ENCODE measurements at regions of chr1 and their contacts with region 1.

Region 1: DNA sequence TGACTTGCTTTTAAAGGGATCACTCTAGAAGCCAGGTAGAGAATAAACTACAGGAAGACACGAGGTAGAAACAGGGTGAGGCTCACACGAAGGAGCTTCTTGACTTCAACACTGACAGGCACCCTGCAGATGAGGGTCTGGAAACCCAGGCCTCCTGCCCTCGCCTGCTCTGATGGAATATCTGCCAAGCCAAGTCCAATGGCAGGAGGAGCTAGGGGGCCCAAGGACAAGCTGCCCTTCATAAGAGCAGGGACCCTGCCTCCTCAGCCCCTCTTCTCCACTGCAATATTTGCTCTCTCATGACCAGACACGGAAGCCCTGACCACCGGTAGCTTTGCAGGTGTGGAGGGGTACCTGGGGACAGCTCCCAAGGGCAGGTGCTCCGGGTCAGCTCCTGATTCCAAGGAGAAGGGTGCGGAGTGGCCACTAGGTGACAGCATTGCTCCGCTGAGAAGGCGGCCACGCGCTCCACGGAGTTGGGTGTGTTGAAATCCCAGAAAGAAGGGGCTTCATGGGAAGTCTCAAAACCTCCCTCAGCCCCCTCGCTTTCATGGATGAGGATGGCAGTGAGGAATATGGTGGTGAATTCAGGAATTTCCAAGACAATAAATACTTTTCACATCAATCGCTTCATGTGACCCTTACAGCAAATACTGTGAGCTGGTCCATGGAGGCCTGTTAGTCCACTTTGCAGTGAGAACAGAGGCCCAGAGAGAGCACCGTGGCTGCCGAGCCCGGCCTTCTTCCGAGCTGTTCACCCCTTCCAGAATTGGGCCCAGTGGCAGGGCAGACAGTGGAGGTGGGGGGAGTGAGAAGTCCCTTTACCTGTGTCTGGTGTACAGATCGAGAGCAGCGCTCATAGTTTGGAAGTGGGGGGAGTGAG is 33.2 kb upstream of the PAX7 start:
- DNase-seq: peak; percentile 15 to 90
- H3K4me3 ChIP-seq: no peak overlapping the region
- H3K27ac ChIP-seq: no peak overlapping the region
- H3K4me1 ChIP-seq: peaks cover 0 to 2% (median under 1%) of the 10 kb centered on the region in 4 experiments; a peak in 1 of 7 replicates
- H3K27me3 ChIP-seq: peaks cover 0 to 11% (median 5%) of the 10 kb centered on the region in 4 experiments; a peak in 5 of 7 replicates
- CTCF ChIP-seq: peak; percentile 90 to 96 (median 95)
- EP300 ChIP-seq: no peak
- POLR2A ChIP-seq: no peak
- RAD21 ChIP-seq: peak; percentile 99 to 100

Region 2: GRCh38 chr1:18373882-18374493 is 223.4 kb before region 1 on chr1:
- CTCF ChIA-PET with region 1: no interaction called
- POLR2A ChIA-PET with region 1: no interaction called
- DNase-seq: peak; percentile 44 to 96
- H3K4me3 ChIP-seq: no peak overlapping the region
- H3K27ac ChIP-seq: no peak overlapping the region
- H3K4me1 ChIP-seq: peaks cover 0 to 6% (median 0%) of the 10 kb centered on the region in 4 experiments; a peak in 2 of 7 replicates
- H3K27me3 ChIP-seq: peaks cover 0 to 3% (median 0%) of the 10 kb centered on the region in 4 experiments; a peak in 2 of 7 replicates
- CTCF ChIP-seq: peak; percentile 95 to 96 (median 96)
- EP300 ChIP-seq: no peak
- POLR2A ChIP-seq: no peak
- RAD21 ChIP-seq: peak; percentile 68 to 83

Region 3: GRCh38 chr1:18535391-18536210 is 61.8 kb before region 1 on chr1:
- CTCF ChIA-PET with region 1: no interaction called
- POLR2A ChIA-PET with region 1: no interaction called
- DNase-seq: peak in 1 of 2 experiments; percentile 38
- H3K4me3 ChIP-seq: no peak overlapping the region
- H3K27ac ChIP-seq: no peak overlapping the region
- H3K4me1 ChIP-seq: no peaks in the 10 kb centered on the region; a peak in 2 of 7 replicates
- H3K27me3 ChIP-seq: peaks cover 0 to 8% (median 3%) of the 10 kb centered on the region in 4 experiments; a peak in 4 of 7 replicates
- CTCF ChIP-seq: no peak
- EP300 ChIP-seq: no peak
- POLR2A ChIP-seq: no peak
- RAD21 ChIP-seq: no peak

Region 4: GRCh38 chr1:18547460-18547859 is 49.9 kb before region 1 on chr1:
- CTCF ChIA-PET with region 1: no interaction called
- POLR2A ChIA-PET with region 1: no interaction called
- DNase-seq: no peak
- H3K4me3 ChIP-seq: no peak overlapping the region
- H3K27ac ChIP-seq: no peak overlapping the region
- H3K4me1 ChIP-seq: peaks cover 0 to 10% (median 3%) of the 10 kb centered on the region in 4 experiments; a peak in 4 of 7 replicates
- H3K27me3 ChIP-seq: peaks cover 0 to 2% (median 0%) of the 10 kb centered on the region in 4 experiments; a peak in 1 of 7 replicates
- CTCF ChIP-seq: no peak
- EP300 ChIP-seq: no peak
- POLR2A ChIP-seq: no peak
- RAD21 ChIP-seq: no peak

Region 5: DNA sequence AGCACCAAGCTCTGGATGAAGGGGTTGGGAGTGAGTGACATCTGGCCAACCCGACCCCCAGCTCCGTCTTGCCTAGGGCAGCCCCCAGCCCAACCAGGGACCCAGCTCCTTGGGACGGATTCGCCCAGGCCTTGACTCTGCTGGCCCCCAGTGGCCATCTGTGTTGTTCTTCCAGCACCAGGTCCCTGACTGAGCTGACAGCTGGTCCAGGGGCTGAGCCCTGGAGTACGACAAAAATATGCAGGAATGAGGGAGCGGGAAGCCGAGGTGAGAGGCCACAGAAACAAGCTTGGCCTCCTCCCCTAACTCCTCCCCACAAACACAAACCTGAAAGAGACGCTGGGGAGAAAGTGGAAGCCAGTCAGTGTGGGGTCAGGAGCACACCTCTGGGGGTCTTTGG is 21.8 kb before region 1 on chr1:
- CTCF ChIA-PET with region 1: interaction called, 15 read pairs
- POLR2A ChIA-PET with region 1: no interaction called
- DNase-seq: peak; percentile 86 to 99
- H3K4me3 ChIP-seq: no peak overlapping the region
- H3K27ac ChIP-seq: no peak overlapping the region
- H3K4me1 ChIP-seq: no peaks in the 10 kb centered on the region; a peak in 1 of 7 replicates
- H3K27me3 ChIP-seq: no peaks in the 10 kb centered on the region; a peak in 1 of 7 replicates
- CTCF ChIP-seq: peak; percentile 84 to 96 (median 94)
- EP300 ChIP-seq: no peak
- POLR2A ChIP-seq: no peak
- RAD21 ChIP-seq: peak; percentile 98 to 99

Region 6: GRCh38 chr1:18643154-18644012 is 46.0 kb after region 1 on chr1:
- CTCF ChIA-PET with region 1: interaction called, 20 read pairs
- POLR2A ChIA-PET with region 1: interaction called, 3 read pairs
- DNase-seq: peak in 1 of 2 experiments; percentile 77
- H3K4me3 ChIP-seq: peak overlapping the region; percentile 8 to 58 (median 38); a peak in 6 of 8 replicates
- H3K27ac ChIP-seq: no peak overlapping the region
- H3K4me1 ChIP-seq: peaks cover 7 to 58% (median 29%) of the 10 kb centered on the region in 4 experiments
- H3K27me3 ChIP-seq: peaks cover 73 to 96% (median 90%) of the 10 kb centered on the region in 4 experiments
- CTCF ChIP-seq: no peak
- EP300 ChIP-seq: no peak
- POLR2A ChIP-seq: no peak
- RAD21 ChIP-seq: no peak

Region 7: GRCh38 chr1:18681423-18681835 is 84.0 kb after region 1 on chr1:
- CTCF ChIA-PET with region 1: interaction called, 123 read pairs
- POLR2A ChIA-PET with region 1: no interaction called
- DNase-seq: no peak
- H3K4me3 ChIP-seq: no peak overlapping the region
- H3K27ac ChIP-seq: no peak overlapping the region
- H3K4me1 ChIP-seq: peaks cover 3 to 8% (median 8%) of the 10 kb centered on the region in 4 experiments; a peak in 6 of 7 replicates
- H3K27me3 ChIP-seq: peaks cover 0 to 28% (median 14%) of the 10 kb centered on the region in 4 experiments; a peak in 6 of 7 replicates
- CTCF ChIP-seq: peak; percentile 31 to 89 (median 72)
- EP300 ChIP-seq: no peak
- POLR2A ChIP-seq: no peak
- RAD21 ChIP-seq: peak; percentile 83 to 91

Region 8: DNA sequence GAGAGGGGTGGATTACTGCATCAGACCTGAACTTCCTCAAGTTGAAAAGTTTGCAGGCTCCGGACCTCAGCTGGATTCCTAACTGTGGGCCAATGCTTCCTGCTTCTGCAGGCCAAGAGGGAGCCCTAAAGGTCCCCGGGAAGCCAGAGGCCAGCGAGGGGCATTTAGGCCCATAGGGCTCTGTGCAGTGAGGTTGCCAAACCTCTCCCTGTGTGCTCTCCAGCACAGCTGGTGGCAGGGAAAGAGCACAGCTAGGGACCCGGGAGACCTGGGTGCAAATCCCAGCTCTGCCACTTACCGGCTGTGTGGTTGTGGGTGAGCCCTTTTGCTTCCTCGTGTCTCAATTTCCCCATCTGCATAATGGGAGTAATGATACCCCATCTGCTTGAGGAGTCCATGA is 133.7 kb after region 1 on chr1:
- CTCF ChIA-PET with region 1: interaction called, 39 read pairs
- POLR2A ChIA-PET with region 1: no interaction called
- DNase-seq: no peak
- H3K4me3 ChIP-seq: no peak overlapping the region
- H3K27ac ChIP-seq: no peak overlapping the region
- H3K4me1 ChIP-seq: no peaks in the 10 kb centered on the region; a peak in 1 of 7 replicates
- H3K27me3 ChIP-seq: peaks cover 0 to 4% (median 0%) of the 10 kb centered on the region in 4 experiments; a peak in 1 of 7 replicates
- CTCF ChIP-seq: no peak
- EP300 ChIP-seq: no peak
- POLR2A ChIP-seq: no peak
- RAD21 ChIP-seq: no peak

Region 9: GRCh38 chr1:18773753-18774152 is 176.4 kb after region 1 on chr1:
- CTCF ChIA-PET with region 1: no interaction called
- POLR2A ChIA-PET with region 1: no interaction called
- DNase-seq: no peak
- H3K4me3 ChIP-seq: no peak overlapping the region
- H3K27ac ChIP-seq: no peak overlapping the region
- H3K4me1 ChIP-seq: peaks cover 0 to 5% (median 2%) of the 10 kb centered on the region in 4 experiments; a peak in 5 of 7 replicates
- H3K27me3 ChIP-seq: no peaks in the 10 kb centered on the region; a peak in 4 of 7 replicates
- CTCF ChIP-seq: no peak
- EP300 ChIP-seq: no peak
- POLR2A ChIP-seq: no peak
- RAD21 ChIP-seq: no peak

Region 10: GRCh38 chr1:18805925-18806849 is 208.8 kb after region 1 on chr1:
- CTCF ChIA-PET with region 1: interaction called, 15 read pairs
- POLR2A ChIA-PET with region 1: no interaction called
- DNase-seq: no peak
- H3K4me3 ChIP-seq: no peak overlapping the region
- H3K27ac ChIP-seq: no peak overlapping the region
- H3K4me1 ChIP-seq: peaks cover 0 to 3% (median 1%) of the 10 kb centered on the region in 4 experiments; a peak in 2 of 7 replicates
- H3K27me3 ChIP-seq: peaks cover 0 to 4% (median 0%) of the 10 kb centered on the region in 4 experiments; a peak in 2 of 7 replicates
- CTCF ChIP-seq: peak in 1 of 3 experiments; percentile 4; a peak in 1 of 4 replicates
- EP300 ChIP-seq: no peak
- POLR2A ChIP-seq: no peak
- RAD21 ChIP-seq: no peak; a peak in 1 of 4 replicates

Region 11: DNA sequence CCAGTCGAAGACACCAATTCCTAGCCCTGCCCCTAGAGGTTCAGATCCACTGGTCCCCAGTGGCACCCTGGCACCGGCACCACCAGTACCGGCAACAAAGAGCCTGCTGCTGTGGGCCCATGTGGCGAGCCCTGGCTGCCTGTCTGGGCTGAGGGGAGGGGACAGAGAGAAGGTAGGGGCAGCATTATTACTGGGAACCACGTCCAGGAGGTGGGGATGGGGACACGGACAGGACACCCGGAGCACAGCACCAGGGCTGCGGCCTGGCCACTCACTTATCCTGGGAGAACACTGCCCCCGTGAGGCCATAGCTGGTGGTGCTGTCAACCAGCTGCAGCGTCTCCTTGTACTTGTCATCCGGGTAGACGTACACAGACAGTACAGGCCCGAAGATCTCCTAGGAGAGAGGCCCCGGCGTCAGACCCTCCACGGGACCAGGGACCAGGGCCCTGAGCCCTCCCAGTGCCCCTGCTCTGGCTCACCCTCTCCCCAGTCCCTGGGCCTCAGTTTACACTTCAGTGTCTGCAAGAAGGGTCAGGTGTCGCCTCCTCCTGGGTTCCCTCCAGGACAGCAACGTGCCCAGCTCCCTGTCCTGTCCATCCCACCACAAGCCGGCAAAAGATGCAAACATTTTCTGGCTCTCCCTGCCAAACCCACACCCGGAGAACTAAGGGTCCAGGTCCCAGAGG is 277.9 kb after region 1 on chr1:
- CTCF ChIA-PET with region 1: interaction called, 45 read pairs
- POLR2A ChIA-PET with region 1: no interaction called
- DNase-seq: peak; percentile 74 to 97
- H3K4me3 ChIP-seq: no peak overlapping the region
- H3K27ac ChIP-seq: no peak overlapping the region
- H3K4me1 ChIP-seq: peaks cover 0 to 6% (median 4%) of the 10 kb centered on the region in 4 experiments; a peak in 4 of 7 replicates
- H3K27me3 ChIP-seq: no peaks in the 10 kb centered on the region
- CTCF ChIP-seq: peak; percentile 93 to 100 (median 97)
- EP300 ChIP-seq: no peak
- POLR2A ChIP-seq: no peak
- RAD21 ChIP-seq: peak; percentile 88 to 91

Measured in H1 (cell line).